ENCODE measurements at regions of chr2 and their contacts with region 1.

Region 1: DNA sequence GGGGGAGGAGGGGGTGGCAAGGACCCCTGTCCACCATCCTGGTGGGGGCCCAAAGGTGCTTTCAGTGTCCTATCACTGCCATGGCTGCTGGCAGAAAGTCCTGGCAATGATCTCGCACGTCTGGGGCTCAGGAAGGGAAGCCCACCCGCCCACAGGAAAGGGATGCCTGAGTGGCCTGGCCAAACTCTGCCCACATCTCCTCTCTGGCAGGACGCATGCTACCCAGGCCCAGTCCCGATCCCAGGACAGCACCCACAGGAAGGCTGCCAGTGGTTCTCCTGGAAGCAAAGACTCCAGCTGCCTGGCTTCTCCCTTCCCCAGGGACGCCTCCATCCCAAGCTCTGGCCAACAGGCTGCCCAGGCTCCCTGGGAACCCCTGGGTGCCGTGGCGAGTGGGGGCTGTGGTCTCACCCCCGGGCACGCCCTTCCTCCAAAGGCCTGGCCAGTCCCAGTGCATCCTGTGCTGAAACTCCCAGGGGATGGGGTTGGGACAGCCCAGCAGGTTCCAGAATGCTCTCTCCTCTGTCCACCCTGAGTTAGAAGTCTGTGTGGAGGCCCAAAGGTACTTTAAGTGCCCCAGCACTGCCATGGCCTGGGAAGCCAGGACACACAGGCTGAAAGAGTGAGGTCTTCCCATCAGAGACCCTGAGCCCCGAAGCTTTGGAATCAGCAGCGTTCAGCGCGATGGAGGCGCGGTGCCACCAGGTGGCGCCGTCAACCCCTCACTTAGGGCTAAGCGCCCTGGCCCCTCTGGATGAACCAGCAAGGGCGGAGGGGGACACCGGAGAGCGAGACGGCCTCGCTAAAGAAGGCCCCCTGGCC is 29.8 kb upstream of the TAF1B start:
- DNase-seq: peak; percentile 96
- H3K4me3 ChIP-seq: peak overlapping the region in 1 of 2 experiments; percentile 4; a peak in 1 of 4 replicates
- H3K27ac ChIP-seq: no peak overlapping the region
- H3K4me1 ChIP-seq: peaks cover 0 to 10% of the 10 kb centered on the region in 2 experiments; a peak in 1 of 4 replicates
- H3K27me3 ChIP-seq: no peaks in the 10 kb centered on the region
- CTCF ChIP-seq: peak; percentile 98
- EP300 ChIP-seq: no peak
- RAD21 ChIP-seq: peak; percentile 91

Region 2: GRCh38 chr2:9824956-9825720 is 11.6 kb after region 1 on chr2:
- CTCF ChIA-PET with region 1: interaction called, 62 read pairs
- POLR2A ChIA-PET with region 1: no interaction called
- DNase-seq: no peak
- H3K4me3 ChIP-seq: no peak overlapping the region
- H3K27ac ChIP-seq: no peak overlapping the region
- H3K4me1 ChIP-seq: peaks cover 0 to 2% of the 10 kb centered on the region in 2 experiments; a peak in 1 of 4 replicates
- H3K27me3 ChIP-seq: no peaks in the 10 kb centered on the region
- CTCF ChIP-seq: no peak
- EP300 ChIP-seq: no peak
- RAD21 ChIP-seq: no peak

Region 3: DNA sequence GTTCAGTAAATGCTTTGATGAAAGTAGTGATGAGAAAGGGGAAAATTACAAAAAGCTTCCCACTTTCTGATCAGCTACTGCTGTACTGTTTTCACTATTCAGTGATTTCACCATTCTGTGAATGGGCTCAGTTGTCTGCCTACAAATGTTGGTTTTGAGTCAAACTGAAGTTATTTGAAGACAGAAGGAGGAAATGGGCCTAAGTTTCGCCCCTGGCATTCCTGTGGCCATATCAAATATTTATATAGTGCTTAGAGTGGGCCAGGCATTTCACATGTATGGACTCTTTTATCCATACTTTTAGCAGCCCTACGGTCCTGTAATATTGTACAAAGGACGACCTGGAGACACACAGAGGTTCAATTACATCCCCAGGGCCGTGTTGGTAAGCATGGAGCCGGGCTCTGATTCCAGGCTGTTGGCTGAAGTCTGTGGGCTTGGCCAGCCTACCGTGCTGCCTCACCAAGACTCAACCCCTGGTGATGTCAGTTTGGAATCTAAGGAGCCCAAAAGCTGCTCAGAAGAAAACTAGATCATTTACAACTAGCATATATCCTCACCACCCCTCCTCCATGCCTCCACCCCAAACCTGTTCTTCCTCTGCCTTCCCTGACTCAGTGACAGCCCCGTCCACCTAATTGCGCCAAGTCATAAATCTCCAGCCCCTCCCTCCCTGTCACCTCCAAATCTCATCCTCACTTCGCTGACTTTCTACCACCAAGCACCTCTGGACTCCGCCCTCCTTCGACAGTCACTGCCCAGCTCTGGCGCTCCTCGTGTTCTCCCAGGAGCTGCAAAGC is 127.9 kb after region 1 on chr2:
- CTCF ChIA-PET with region 1: interaction called, 18 read pairs
- POLR2A ChIA-PET with region 1: no interaction called
- DNase-seq: no peak
- H3K4me3 ChIP-seq: no peak overlapping the region
- H3K27ac ChIP-seq: peak overlapping the region in 1 of 2 experiments; percentile 4; a peak in 1 of 4 replicates
- H3K4me1 ChIP-seq: peaks cover 7 to 11% of the 10 kb centered on the region in 2 experiments; a peak in 3 of 4 replicates
- H3K27me3 ChIP-seq: no peaks in the 10 kb centered on the region
- CTCF ChIP-seq: no peak
- EP300 ChIP-seq: no peak
- RAD21 ChIP-seq: no peak

Region 4: GRCh38 chr2:9975805-9976447 is 162.4 kb after region 1 on chr2:
- CTCF ChIA-PET with region 1: interaction called, 94 read pairs
- POLR2A ChIA-PET with region 1: no interaction called
- DNase-seq: no peak
- H3K4me3 ChIP-seq: no peak overlapping the region
- H3K27ac ChIP-seq: peak overlapping the region in 1 of 2 experiments; percentile 57; a peak in 2 of 4 replicates
- H3K4me1 ChIP-seq: peaks cover 4 to 34% of the 10 kb centered on the region in 2 experiments; a peak in 3 of 4 replicates
- H3K27me3 ChIP-seq: no peaks in the 10 kb centered on the region
- CTCF ChIP-seq: no peak
- EP300 ChIP-seq: peak in 1 of 2 experiments; percentile 86; a peak in 1 of 4 replicates
- RAD21 ChIP-seq: no peak

Region 5: GRCh38 chr2:10028988-10029874 is 215.7 kb after region 1 on chr2:
- CTCF ChIA-PET with region 1: interaction called, 25 read pairs
- POLR2A ChIA-PET with region 1: no interaction called
- DNase-seq: no peak
- H3K4me3 ChIP-seq: no peak overlapping the region
- H3K27ac ChIP-seq: no peak overlapping the region
- H3K4me1 ChIP-seq: peaks cover 0 to 16% of the 10 kb centered on the region in 2 experiments; a peak in 1 of 4 replicates
- H3K27me3 ChIP-seq: no peaks in the 10 kb centered on the region
- CTCF ChIP-seq: no peak
- EP300 ChIP-seq: no peak
- RAD21 ChIP-seq: no peak

Region 6: DNA sequence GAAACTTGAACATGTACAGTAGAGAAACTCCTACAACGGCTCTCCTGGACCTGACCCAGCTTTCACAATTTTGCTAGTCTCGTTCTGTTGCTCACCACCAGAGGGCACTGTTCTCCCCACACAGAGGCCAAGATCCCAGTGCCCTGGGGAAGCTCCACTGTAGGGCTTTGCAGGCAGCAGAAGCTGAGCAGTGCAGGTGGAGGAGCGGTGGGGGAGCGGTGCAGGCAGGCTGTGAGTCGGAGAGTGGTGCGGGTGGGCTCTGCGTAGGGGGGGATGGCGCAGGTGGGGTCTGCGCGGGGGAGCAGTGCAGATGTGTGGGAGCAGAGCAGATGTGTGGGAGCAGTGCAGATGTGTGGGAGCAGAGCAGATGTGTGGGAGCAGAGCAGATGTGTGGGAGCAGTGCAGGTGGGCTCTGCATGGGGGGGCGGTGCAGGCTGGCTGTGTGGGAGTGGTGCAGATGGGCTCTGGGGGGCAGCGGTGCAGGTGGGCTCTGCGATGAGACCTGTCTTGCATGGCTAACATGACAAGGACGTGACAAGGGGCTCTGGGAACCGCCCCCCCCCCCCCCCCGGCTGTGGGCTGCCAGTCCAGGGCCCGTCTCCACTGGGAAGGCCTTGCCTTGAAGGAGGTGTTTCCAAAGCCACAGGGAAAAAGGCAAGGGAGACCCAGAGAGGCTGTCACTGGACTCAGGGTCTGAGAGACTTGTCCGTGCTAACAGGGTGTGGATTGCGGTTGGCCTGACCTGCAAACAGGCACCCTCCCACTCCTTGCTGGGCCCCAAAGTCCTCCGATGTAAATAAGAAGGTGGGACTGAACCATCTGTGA is 259.3 kb after region 1 on chr2:
- CTCF ChIA-PET with region 1: interaction called, 28 read pairs
- POLR2A ChIA-PET with region 1: no interaction called
- DNase-seq: peak; percentile 97
- H3K4me3 ChIP-seq: no peak overlapping the region; a peak in 1 of 4 replicates
- H3K27ac ChIP-seq: no peak overlapping the region
- H3K4me1 ChIP-seq: peaks cover 0 to 2% of the 10 kb centered on the region in 2 experiments; a peak in 1 of 4 replicates
- H3K27me3 ChIP-seq: peaks cover 17% of the 10 kb centered on the region; the same call in 1 of the 2 replicates
- CTCF ChIP-seq: peak; percentile 96
- EP300 ChIP-seq: no peak
- RAD21 ChIP-seq: peak; percentile 91